Pancreas (tissue), 10 donors: ENCODE measurements at regions of chr21 and their contacts with region 1.

Region 1: DNA sequence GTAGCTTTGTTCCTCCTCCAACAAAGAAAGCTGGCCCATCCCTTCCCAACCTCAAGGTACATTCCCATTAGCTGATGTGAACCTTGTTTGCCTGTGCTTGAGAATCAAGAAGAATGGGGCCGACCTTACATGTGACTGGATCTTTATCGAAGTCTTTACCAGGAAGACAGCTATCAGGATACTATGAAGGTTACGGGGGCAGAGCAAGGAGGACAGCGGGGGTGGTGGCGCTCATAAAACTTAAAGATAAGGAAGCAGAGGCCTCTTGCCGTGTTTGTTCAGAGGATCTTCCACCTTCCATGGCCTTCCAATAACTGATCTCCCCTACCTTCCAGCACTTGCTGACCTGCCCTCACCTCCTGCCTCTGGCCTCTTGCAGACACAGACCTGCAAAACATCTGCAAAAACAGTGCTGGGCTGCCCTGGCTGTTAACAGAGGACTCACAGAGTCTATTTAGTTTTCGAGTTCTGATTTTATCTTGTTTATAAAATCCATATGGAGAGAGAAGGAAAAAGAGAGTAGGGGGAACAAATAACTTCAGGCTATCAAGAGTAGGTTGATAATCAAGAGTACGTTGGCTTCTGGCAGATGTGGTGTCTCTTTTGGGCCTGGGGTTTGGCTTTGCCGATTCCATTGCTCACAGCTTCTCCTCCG is 198.0 kb downstream of the HUNK start:
- DNase-seq: no peak
- ATAC-seq: no peak
- H3K4me3 ChIP-seq: no peak overlapping the region
- H3K27ac ChIP-seq: no peak overlapping the region
- H3K4me1 ChIP-seq: no peaks in the 10 kb centered on the region
- H3K27me3 ChIP-seq: no peaks in the 10 kb centered on the region
- CTCF ChIP-seq: no peak

Region 2: GRCh38 chr21:32135401-32136363 is 64.9 kb after region 1 on chr21:
- intact Hi-C with region 1: loop called in 1 of 3 experiments (anchors 10 kb)
- DNase-seq: no peak
- ATAC-seq: no peak
- H3K4me3 ChIP-seq: no peak overlapping the region
- H3K27ac ChIP-seq: no peak overlapping the region
- H3K4me1 ChIP-seq: no peaks in the 10 kb centered on the region
- H3K27me3 ChIP-seq: no peaks in the 10 kb centered on the region
- CTCF ChIP-seq: no peak